Activated CD8-positive, alpha-beta T cell treated with anti-CD3 and anti-CD28 coated beads for 36 hours (primary cell): ENCODE measurements at regions of chr2 and their contacts with region 1.

Region 1: GRCh38 chr2:160394153-160394552 is 99.5 kb downstream of the RBMS1 start:
- DNase-seq: no peak
- ATAC-seq: peak; percentile 89
- H3K4me3 Mint-ChIP-seq: peak overlapping the region; percentile 53
- H3K27ac Mint-ChIP-seq: peak overlapping the region; percentile 92
- H3K4me1 Mint-ChIP-seq: peaks cover 57% of the 10 kb centered on the region
- H3K27me3 Mint-ChIP-seq: no peaks in the 10 kb centered on the region
- CTCF ChIP-seq: no peak

Region 2: DNA sequence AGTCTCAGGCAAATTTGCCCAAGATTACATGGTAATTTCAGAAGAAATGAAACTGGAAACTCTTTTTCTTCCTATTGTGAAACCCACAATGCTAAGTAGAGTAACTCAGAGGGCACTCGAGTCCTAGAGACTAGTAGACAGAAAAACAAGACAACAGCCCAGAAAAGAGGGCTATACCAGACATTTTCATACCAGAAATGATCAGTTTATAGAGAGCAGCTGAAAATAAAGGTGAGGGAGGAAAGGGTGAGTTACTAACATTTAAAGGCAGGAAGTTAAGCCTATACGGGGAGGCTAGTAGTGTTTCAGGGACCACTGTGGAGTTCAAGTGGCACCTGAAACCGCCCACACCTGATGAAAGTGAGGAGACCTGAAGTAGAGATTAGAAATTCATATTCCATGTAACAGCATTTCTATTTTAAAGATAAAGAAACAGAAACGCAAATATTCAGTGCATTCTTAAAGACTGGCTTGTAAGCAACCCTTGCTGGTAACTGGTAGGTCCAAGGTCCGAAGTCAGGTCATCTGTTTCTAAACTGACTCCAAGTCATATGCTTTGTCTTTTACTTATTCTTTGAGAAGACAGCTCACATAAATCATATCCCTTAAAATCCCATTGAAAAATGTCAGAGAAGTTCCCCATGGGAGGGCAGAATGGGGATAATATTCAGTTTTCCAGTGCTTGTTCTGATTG is 48.9 kb before region 1 on chr2:
- CTCF ChIA-PET with region 1: no interaction called
- POLR2A ChIA-PET with region 1: no interaction called
- intact Hi-C with region 1: loop called (anchors 5 kb)
- DNase-seq: peak; percentile 17
- ATAC-seq: peak; percentile 81
- H3K4me3 Mint-ChIP-seq: peak overlapping the region; percentile 60
- H3K27ac Mint-ChIP-seq: peak overlapping the region; percentile 90
- H3K4me1 Mint-ChIP-seq: peaks cover 80% of the 10 kb centered on the region
- H3K27me3 Mint-ChIP-seq: no peaks in the 10 kb centered on the region
- CTCF ChIP-seq: no peak